Activated naive CD4-positive, alpha-beta T cell treated with anti-CD3 and anti-CD28 coated beads for 36 hours (primary cell): ENCODE measurements at regions of chr21 and their contacts with region 1.

Region 1: DNA sequence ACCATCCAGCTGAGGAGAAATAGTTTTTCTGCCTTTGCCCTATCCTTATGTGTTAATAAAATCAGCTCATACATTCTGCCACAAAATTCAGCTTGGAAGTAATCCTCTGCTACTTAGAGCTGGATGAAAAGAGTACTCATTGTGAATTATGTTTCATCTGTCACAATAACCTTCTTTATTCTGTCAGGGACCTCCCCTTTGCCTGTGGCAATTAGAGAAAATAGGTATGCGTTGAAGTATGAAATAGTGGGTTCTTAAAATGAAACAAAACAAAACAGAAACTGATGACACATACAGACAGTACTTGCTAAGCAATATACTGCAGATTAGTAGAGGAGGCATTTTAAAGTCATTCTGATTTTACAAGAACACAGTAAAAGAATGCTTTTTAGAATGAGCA is 578.5 kb downstream of the USP25 start:
- DNase-seq: no peak
- H3K4me3 Mint-ChIP-seq: no peak overlapping the region
- H3K27ac Mint-ChIP-seq: no peak overlapping the region
- H3K4me1 Mint-ChIP-seq: peaks cover 10% of the 10 kb centered on the region
- H3K27me3 Mint-ChIP-seq: peaks cover 6% of the 10 kb centered on the region

Region 2: GRCh38 chr21:16250273-16250672 is 58.0 kb before region 1 on chr21:
- CTCF ChIA-PET with region 1: no interaction called
- intact Hi-C with region 1: loop called (anchors 10 kb)
- DNase-seq: no peak
- H3K4me3 Mint-ChIP-seq: no peak overlapping the region
- H3K27ac Mint-ChIP-seq: no peak overlapping the region
- H3K4me1 Mint-ChIP-seq: no peaks in the 10 kb centered on the region
- H3K27me3 Mint-ChIP-seq: no peaks in the 10 kb centered on the region